SK-N-SH (cell line): ENCODE measurements at regions of chr12 and their contacts with region 1.

Region 1: GRCh38 chr12:13661005-13661887 is 320.2 kb downstream of the GRIN2B start:
- DNase-seq: peak; percentile 32
- H3K4me3 ChIP-seq: no peak overlapping the region; a peak in 1 of 4 replicates
- H3K27ac ChIP-seq: no peak overlapping the region
- H3K4me1 ChIP-seq: no peaks in the 10 kb centered on the region
- H3K27me3 ChIP-seq: peaks cover 8% of the 10 kb centered on the region; the same call in 1 of the 2 replicates
- CTCF ChIP-seq: peak; percentile 72
- EP300 ChIP-seq: no peak
- RAD21 ChIP-seq: peak; percentile 69

Region 2: GRCh38 chr12:13255792-13256691 is 405.2 kb before region 1 on chr12:
- CTCF ChIA-PET with region 1: interaction called, 10 read pairs
- POLR2A ChIA-PET with region 1: no interaction called
- DNase-seq: peak; percentile 87
- H3K4me3 ChIP-seq: peak overlapping the region; percentile 30 to 59; a peak in 3 of 4 replicates
- H3K27ac ChIP-seq: no peak overlapping the region
- H3K4me1 ChIP-seq: peaks cover 0 to 4% of the 10 kb centered on the region in 2 experiments; a peak in 1 of 4 replicates
- H3K27me3 ChIP-seq: no peaks in the 10 kb centered on the region; the same call in 1 of the 2 replicates
- CTCF ChIP-seq: peak; percentile 99
- EP300 ChIP-seq: peak in 1 of 2 experiments; percentile 16; a peak in 1 of 4 replicates
- RAD21 ChIP-seq: peak; percentile 75

Region 3: GRCh38 chr12:13278249-13278787 is 382.9 kb before region 1 on chr12:
- CTCF ChIA-PET with region 1: interaction called, 18 read pairs
- POLR2A ChIA-PET with region 1: no interaction called
- DNase-seq: peak; percentile 87
- H3K4me3 ChIP-seq: peak overlapping the region in 1 of 2 experiments; percentile 62; a peak in 1 of 4 replicates
- H3K27ac ChIP-seq: no peak overlapping the region
- H3K4me1 ChIP-seq: peaks cover 0 to 4% of the 10 kb centered on the region in 2 experiments; a peak in 1 of 4 replicates
- H3K27me3 ChIP-seq: peaks cover 47% of the 10 kb centered on the region; the same call in 1 of the 2 replicates
- CTCF ChIP-seq: peak; percentile 97
- EP300 ChIP-seq: no peak
- RAD21 ChIP-seq: peak; percentile 73

Region 4: GRCh38 chr12:13362260-13362841 is 298.9 kb before region 1 on chr12:
- CTCF ChIA-PET with region 1: interaction called, 18 read pairs
- POLR2A ChIA-PET with region 1: no interaction called
- DNase-seq: peak; percentile 65
- H3K4me3 ChIP-seq: 0 out of 4 replicates have a peak overlapping the region, but pooled peaks of 1 of the 2 experiments have one; percentile 33
- H3K27ac ChIP-seq: no peak overlapping the region
- H3K4me1 ChIP-seq: no peaks in the 10 kb centered on the region
- H3K27me3 ChIP-seq: peaks cover 4% of the 10 kb centered on the region; the same call in 1 of the 2 replicates
- CTCF ChIP-seq: peak; percentile 88
- EP300 ChIP-seq: no peak
- RAD21 ChIP-seq: peak; percentile 74

Region 5: GRCh38 chr12:13680916-13681315 is 19.7 kb after region 1 on chr12:
- CTCF ChIA-PET with region 1: interaction called, 13 read pairs
- POLR2A ChIA-PET with region 1: no interaction called
- DNase-seq: no peak
- H3K4me3 ChIP-seq: no peak overlapping the region
- H3K27ac ChIP-seq: no peak overlapping the region
- H3K4me1 ChIP-seq: no peaks in the 10 kb centered on the region
- H3K27me3 ChIP-seq: no peaks in the 10 kb centered on the region
- CTCF ChIP-seq: no peak
- EP300 ChIP-seq: no peak
- RAD21 ChIP-seq: no peak